IMR-90 (cell line): ENCODE measurements at regions of chr1 and their contacts with region 1.

Region 1: DNA sequence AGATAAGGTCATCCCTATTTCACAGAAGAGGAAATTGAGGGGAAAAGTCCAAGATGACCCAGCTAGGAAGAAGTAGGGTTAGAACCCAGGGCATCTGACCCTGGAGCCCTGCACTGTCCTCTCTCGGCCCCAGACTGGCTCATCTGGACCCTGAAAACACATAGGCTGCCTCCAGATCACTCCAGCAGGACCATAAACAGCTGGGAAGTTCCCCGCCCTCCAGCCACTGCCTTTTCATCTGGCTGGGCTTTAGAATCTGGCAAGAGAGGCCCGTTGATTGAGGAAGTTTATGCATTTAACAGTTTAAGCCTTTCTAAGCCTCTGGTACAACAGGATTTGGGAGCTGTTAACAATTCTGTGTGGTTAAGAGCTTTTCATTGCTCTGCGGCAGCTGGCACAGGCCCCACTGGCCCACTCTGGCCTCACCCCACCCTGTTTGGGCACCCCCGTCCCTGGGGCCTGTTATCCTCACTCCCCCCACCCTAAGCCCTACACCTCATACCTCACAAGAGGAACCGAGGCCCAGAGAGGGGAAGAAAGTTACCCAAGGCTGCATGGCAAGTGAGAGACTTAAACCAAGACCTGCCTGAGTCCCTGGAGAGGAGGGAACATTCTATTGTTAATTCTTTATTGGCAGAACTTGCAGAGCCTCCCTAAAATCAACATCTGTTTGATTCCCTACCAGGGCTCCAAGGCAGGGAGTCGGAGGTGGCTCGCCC is 84.2 kb downstream of the EPHB2 start:
- DNase-seq: peak; percentile 17
- ATAC-seq: peak; percentile 63
- H3K4me3 ChIP-seq: no peak overlapping the region
- H3K27ac ChIP-seq: no peak overlapping the region
- H3K4me1 ChIP-seq: peaks cover 5% of the 10 kb centered on the region; the same call in 1 of the 2 replicates
- H3K27me3 ChIP-seq: no peaks in the 10 kb centered on the region
- CTCF ChIP-seq: no peak
- POLR2A ChIP-seq: no peak
- RAD21 ChIP-seq: no peak

Region 2: DNA sequence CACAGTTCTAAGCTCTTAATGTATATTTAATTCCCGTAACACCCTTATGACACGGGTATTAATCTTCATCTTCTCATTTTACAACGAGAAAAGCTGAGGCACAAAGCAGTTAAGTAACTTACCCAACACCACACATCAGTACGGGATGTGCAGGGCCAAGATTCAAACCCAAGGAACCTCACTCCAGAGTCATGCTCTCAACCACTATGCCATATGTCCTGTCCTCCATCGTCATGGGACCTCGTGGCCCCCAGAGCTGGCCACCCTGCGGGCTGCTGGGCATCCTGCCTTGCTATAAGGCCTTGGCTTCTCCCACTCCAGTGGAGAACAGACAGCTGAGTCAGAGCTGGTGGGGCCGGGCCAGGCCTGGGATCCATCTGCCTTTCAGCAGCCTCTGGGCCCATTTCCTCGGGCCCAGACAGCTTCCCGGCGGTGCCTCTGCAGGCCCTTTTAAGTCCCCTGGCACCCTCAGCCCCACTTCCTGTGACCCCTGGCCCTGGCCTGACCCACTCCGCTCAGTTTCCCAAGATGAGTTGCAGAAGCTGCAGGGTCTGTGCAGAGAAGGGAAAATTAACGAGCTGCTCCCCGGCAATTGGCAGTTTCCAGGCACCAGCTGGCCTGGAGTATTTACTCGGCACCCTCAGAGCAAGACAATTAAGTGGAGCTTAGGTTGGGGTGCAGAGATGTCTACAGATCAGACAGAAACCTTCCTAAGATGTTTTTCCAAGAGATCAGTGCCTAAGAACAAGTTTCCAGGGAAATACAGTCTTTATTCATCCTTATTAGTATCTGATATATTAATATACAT is 14.1 kb after region 1 on chr1:
- CTCF ChIA-PET with region 1: interaction called, 3 read pairs
- POLR2A ChIA-PET with region 1: no interaction called
- dilution Hi-C with region 1: no loop called
- in situ Hi-C with region 1: no loop called
- intact Hi-C with region 1: loop called (anchors 2 kb)
- DNase-seq: peak; percentile 87
- ATAC-seq: peak; percentile 90
- H3K4me3 ChIP-seq: no peak overlapping the region
- H3K27ac ChIP-seq: peak overlapping the region; percentile 18
- H3K4me1 ChIP-seq: peaks cover 11% of the 10 kb centered on the region
- H3K27me3 ChIP-seq: no peaks in the 10 kb centered on the region
- CTCF ChIP-seq: no peak
- POLR2A ChIP-seq: no peak
- RAD21 ChIP-seq: peak; percentile 31; the same call in 1 of the 2 replicates